ENCODE measurements at regions of chr16 and their contacts with region 1.

Region 1: GRCh38 chr16:30984669-30985400 is at the start of gene HSD3B7:
- DNase-seq: peak; percentile 92
- CTCF ChIP-seq: peak; percentile 89

Region 2: GRCh38 chr16:30761928-30762810 is 222.7 kb before region 1 on chr16 and contains the starts of genes CFAP119 and RNF40:
- CTCF ChIA-PET with region 1: no interaction called
- POLR2A ChIA-PET with region 1: no interaction called
- DNase-seq: peak; percentile 99
- CTCF ChIP-seq: no peak

Region 3: DNA sequence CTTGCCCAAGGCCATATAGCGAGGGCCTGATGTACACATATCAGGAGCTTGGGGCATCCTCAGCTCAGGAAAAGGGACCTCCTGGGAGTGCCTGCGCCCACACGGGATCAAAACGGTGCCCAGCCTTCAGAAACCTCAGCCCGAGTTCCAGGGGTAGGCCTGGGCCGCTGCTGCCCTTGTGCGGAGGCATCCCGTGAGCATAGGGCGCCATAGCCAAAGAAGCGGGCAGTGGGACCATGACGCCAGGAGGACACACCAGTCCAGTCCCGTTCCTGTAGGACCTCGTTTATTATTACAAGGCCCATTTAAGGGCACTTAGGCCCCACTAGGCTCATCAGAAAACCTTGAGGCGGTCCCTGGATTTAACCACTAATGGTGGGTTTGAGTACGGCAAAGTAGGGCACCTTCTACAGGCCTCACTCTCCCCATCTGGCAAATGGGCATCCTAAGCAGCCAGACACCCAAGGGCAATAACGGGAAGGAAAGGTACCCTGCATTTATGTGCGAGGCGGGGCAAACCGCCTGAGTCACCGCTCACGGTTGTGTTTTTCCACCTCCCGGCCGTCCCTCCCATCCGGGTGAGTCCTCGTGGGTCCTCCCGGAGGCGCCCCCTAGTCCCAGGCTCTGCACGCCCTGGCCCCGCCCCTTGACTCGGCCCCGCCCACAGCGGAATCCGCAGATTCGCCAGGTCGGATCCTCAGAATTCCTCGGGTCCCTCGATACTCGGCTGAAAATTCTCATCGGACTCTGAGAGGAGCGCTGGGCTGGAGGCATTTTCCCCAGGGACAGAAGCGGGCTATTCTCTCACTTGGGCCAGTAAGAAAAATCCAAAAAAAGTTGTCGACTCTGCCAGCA is 28.0 kb before region 1 on chr16:
- CTCF ChIA-PET with region 1: interaction called, 17 read pairs
- POLR2A ChIA-PET with region 1: no interaction called
- DNase-seq: peak; percentile 87
- CTCF ChIP-seq: peak; percentile 38

Region 4: DNA sequence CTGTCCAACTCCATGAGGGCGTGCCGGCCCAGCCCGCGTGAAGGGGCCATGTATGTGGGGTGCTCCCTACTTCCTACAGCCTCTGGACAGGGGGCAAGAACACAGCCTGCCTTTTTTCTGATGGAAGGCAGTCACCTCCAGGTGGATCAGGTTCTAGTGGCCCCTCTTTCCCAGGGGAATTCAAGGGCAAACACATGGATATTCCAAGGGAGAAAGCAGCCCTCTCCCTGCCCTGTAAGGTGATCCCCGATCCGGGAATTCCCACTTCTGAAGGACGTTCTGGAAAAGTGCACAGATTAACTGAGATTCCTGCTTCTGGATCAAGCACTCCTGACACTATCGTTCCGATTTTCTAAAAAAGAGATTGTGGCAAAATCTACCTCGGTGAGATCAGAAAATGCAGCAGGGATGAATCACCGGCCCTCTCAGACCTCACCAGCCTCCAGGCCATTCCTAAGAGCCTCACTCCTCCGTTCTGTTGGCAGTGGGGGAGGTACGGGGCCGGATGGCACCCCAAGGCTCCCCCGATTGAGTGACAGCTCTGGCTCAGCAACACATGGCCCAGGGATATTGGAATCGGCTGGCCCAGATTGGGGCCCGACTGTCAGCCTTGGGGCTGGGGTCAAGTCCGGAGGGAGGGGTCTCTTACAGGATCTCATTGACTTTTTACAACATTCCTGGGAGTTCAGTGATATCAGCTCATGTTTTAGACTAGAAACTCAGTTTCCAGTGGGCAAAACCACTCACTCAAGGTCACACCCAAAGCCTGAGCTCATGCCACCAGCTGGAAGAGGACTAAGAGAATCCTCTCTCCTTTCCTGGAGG is 13.3 kb after region 1 on chr16:
- CTCF ChIA-PET with region 1: interaction called, 27 read pairs
- POLR2A ChIA-PET with region 1: interaction called, 3 read pairs
- DNase-seq: no peak
- CTCF ChIP-seq: no peak

Region 5: DNA sequence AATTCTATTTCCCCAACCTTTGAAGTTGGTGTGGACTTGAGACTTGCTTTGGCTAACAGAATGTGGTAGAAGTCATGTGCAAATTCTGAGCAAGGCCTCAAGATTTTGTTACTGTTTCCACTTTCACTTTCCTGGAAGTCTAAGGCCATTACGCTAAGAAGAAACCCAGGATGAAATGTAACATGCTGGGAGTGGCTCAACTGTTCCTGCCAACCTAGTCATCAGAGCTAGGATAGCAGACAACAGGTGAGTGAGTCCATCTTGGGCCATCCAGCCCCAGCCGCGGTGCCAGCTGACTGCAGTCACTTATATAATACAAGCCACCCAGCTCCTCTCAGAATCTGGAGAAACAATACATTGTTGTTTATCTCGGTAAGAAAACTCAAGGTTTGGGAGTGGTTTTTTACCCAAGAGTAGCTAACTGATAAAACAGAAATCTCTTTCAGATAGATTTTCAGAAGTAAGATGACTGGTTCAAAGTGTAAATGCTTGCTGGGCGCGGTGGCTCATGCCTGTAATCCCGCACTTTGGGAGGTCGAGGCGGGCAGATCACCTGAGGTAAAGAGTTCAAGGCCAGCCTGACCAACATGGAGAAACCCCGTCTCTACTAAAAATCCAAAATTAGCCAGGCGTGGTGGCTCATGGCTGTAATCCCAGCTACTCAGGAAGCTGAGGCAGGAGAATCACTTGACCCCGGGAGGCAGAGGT is 37.9 kb after region 1 on chr16:
- CTCF ChIA-PET with region 1: interaction called, 11 read pairs
- POLR2A ChIA-PET with region 1: no interaction called
- DNase-seq: no peak
- CTCF ChIP-seq: no peak

Region 6: DNA sequence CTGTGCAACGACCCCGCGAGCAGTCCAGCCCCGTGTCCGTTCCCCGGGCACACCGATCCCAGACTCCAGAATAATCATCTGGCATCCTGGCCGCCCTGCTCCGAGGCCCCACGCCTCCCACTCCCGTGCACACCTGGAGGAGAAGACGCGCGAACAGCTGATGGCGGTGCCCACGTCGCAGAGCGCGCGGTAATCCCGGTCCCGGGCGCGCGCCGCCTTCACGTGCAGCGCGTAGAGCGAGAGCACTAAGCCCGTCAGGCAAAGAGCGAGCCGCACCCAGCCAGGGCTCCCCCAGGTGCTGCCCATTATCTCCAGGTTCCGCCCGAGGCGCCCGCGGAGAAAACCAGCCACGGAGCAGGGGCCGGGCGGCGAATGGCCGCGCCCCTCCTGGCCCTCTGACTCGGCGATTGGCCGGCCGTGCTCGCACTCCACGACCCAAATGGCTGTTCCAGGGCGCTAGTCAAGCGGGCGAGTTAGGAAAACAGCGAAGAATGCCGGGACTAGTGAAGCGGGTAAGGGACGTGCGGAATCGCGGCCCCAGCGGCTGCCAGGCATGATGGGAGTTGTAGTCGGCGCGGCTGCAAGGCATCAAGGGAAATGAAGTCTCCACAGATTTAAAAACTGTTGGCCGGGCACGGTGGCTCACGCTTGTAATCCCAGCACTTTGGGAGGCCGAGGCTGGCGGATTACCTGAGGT is 109.7 kb after region 1 on chr16 and contains the start of gene VKORC1:
- CTCF ChIA-PET with region 1: interaction called, 32 read pairs
- POLR2A ChIA-PET with region 1: no interaction called
- DNase-seq: peak; percentile 91
- CTCF ChIP-seq: no peak

Region 7: DNA sequence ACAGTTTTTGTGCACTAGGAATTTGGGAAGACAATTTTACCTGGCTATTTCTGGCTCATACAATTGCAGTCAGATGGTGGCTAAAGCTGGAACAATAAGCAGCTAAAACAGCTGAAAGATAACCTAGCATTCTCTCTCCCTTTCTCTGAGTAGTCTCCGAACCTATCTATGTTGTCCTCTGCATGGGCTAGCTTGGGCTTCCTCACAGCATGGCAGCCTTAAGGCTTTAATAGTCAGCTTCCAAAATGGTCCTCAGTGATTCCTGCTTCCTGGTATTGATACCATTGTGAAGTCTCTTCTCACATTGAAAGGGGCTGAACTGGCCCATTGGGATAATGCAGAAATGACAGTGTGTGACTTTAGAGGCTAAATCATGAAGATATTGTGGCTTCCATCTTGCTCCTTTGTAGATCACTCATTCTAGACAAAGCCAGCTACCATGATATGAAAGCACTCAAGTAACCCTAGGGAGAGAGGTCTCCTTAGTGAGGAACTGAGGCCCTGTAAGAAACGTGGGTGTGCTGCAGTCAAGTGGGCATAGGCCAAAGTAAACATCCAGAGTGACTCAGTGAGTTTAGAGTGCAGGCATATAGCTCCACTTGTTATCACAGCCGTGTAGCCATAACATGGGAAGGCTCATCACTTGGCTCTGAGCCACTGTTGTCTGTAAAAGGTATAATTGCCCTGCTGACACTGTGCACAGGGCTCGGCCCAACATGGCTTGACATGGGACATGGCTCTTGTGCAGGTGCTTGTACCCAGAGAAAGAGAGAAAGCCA is 115.2 kb after region 1 on chr16:
- CTCF ChIA-PET with region 1: interaction called, 32 read pairs
- POLR2A ChIA-PET with region 1: no interaction called
- DNase-seq: no peak
- CTCF ChIP-seq: no peak

Region 8: GRCh38 chr16:31440516-31441184 is 455.8 kb after region 1 on chr16:
- CTCF ChIA-PET with region 1: interaction called, 28 read pairs
- POLR2A ChIA-PET with region 1: no interaction called
- DNase-seq: no peak
- CTCF ChIP-seq: no peak